Esophagus squamous epithelium (tissue), 5 donors: ENCODE measurements at regions of chr14 and their contacts with region 1.

Region 1: DNA sequence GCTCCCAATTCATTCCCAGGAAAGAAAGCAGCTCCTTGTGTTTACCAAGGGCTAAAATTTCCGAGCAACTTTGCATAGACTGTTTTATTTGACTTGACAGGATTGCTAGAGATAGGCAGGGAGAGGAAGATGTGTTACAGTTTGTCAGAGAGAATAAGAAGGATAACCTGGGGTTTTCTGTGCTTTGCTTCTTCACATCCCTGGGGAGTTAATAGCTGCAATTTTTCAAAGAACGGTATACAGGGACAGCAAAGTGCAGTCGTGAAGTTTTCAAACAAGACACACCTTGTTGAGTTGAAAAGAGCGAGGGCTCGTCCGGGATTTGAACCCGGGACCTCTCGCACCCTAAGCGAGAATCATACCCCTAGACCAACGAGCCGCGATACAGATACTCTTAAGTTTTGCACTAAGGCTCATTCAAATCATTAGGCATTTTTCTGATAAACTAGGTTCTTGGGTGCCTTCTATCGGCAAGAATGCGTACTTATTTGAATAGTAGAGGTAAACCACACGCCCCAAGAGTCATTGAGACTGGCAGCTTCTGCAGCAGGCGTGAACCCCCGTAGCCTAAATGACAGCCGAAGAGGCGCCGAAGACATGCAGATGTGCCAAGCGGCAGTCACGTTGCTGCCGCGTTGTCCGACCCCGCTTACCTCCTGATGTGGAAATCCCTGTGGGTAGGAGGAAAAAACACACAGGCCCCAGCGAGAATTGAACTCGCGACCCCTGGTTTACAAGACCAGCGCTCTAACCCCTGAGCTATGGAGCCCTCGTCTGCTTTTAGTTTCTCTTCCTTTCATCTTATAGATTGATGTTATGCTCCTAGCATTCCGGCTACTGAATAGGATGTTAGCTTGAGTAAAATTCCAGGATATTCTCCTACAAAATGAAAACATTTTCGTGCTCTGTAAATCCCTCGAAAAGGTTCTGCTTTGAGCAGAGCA is 22.2 kb upstream of the RNASE12 start:
- DNase-seq: no peak
- H3K4me3 ChIP-seq: peak overlapping the region; percentile 24 to 67 (median 44)
- H3K27ac ChIP-seq: peak overlapping the region; percentile 35 to 88 (median 78)
- H3K4me1 ChIP-seq: peaks cover 0 to 45% (median 6%) of the 10 kb centered on the region in 3 donors
- H3K27me3 ChIP-seq: no peaks in the 10 kb centered on the region
- CTCF ChIP-seq: peak; percentile 49 to 91 (median 82)
- POLR2A ChIP-seq: no peak

Region 2: DNA sequence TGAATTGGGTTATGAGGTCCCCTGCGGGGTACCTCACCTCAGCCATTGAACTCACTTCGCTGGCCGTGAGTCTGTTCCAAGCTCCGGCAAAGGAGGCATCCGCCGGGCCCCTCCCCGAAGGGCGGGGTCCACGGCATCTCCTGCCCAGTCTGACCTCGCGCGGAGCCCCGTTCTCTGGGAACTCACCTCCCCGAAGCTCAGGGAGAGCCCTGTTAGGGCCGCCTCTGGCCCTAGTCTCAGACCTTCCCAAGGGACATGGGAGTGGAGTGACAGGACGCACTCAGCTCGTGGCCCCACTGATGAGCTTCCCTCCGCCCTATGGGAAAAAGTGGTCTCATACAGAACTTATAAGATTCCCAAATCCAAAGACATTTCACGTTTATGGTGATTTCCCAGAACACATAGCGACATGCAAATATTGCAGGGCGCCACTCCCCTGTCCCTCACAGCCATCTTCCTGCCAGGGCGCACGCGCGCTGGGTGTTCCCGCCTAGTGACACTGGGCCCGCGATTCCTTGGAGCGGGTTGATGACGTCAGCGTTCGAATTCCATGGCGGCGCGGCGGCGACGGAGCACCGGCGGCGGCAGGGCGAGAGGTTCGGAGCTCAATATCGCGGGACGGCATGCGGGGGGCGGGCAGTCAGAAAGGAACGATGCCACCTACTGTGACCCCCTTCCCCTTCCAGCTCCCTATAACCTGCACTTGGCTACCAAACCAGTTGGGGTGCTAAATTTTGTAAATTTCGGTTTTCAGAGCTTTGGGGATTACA is 270.1 kb before region 1 on chr14 and contains the start of gene PARP2:
- intact Hi-C with region 1: loop called (anchors 5 kb)
- DNase-seq: peak; percentile 84
- H3K4me3 ChIP-seq: peak within 1 kb of the TSS; percentile 65 to 89 (median 74)
- H3K27ac ChIP-seq: peak within 1 kb of the TSS; percentile 93 to 97 (median 96)
- H3K4me1 ChIP-seq: peaks cover 5 to 18% (median 9%) of the 10 kb centered on the region in 3 donors
- H3K27me3 ChIP-seq: no peaks in the 10 kb centered on the region
- CTCF ChIP-seq: peak in 1 of 6 experiments; percentile 18
- POLR2A ChIP-seq: peak; percentile 19 to 94 (median 70)
- total RNA-seq, gene PARP2: 5.0 to 20.3 (median 11.7) TPM

Region 3: DNA sequence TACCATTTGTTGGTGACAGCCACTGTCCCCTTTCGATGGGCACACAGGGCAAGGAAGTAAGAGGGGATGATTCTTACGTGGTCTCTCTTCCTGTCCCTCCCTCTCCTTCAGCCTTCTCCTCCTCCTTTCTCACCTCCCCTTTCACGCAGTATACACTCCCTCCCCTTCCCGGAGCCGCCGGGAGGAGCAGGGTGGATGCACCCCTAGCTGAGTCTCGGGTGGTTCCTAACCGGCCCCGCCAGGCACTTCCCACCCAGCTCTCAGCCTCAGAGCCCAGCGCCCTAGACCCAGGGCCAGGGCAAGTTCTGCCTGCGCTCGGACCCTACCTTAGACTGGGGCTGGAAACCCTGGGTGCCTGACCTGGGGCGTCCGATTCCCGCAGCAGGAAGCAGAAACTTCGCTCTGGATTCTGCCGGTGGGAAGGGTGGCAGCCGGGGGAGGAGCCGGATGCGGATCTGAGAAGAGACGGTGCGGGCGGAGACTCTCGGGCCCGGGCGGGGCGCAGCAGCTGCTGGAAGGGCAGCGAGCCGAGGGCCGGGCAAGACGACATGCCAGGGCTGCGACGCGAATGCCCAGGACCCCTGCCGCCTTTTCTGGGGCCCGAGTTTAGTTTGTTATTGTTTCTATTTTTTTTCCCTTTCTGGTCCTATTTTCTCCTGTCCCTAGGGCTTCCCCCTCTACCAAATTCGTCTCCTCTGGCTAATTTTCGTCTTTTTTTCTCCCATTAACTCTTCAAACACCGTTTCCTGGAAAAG is 200.1 kb before region 1 on chr14 and contains the start of gene TEP1:
- intact Hi-C with region 1: loop called (anchors 5 kb)
- DNase-seq: peak; percentile 40
- H3K4me3 ChIP-seq: peak within 1 kb of the TSS; percentile 53 to 91 (median 85)
- H3K27ac ChIP-seq: peak within 1 kb of the TSS; percentile 88 to 99 (median 98)
- H3K4me1 ChIP-seq: peaks cover 0 to 35% (median 10%) of the 10 kb centered on the region in 3 donors
- H3K27me3 ChIP-seq: no peaks in the 10 kb centered on the region
- CTCF ChIP-seq: no peak
- POLR2A ChIP-seq: peak in 3 of 4 donors; percentile 11 to 84 (median 80)
- total RNA-seq, gene TEP1: 13.4 to 16.6 (median 14.7) TPM

Region 4: DNA sequence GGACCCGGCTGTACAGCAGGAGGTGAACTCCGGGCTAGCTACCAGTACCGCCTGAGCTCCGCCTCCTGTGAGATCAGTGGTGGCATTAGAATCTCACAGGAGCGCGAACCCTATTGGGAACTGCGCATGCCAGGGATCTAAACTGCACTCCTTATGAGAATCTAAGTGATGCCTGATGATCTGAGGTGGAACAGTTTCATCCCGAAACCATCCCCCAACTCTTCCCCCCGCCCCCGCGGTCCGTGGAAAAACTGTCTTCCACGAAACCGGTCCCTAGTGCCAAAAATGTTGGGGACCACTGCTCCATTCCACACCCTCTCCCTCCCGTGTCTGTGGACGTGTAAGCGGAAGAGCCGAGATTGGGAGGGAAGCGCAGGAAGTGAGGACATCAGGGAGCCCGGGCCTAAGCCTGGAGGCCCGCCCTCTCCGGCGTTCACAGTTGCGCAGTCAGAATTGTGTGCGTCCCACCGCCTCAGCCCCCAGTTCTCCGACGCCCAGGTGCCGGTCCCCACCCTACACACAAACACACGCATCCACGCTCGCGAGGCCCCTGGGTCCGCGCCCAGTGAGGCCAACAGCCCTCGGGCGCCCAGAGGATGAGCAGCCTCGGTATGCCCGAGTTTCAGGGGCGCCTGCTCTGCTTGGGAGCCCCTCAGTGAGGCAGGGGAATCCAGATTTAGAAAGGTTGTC is 69.2 kb after region 1 on chr14:
- intact Hi-C with region 1: loop called (anchors 2 kb)
- DNase-seq: peak; percentile 31
- H3K4me3 ChIP-seq: peak overlapping the region; percentile 65 to 93 (median 80)
- H3K27ac ChIP-seq: peak overlapping the region; percentile 98 to 100 (median 99)
- H3K4me1 ChIP-seq: peaks cover 20 to 66% (median 21%) of the 10 kb centered on the region in 3 donors
- H3K27me3 ChIP-seq: no peaks in the 10 kb centered on the region
- CTCF ChIP-seq: peak in 3 of 6 experiments; percentile 3 to 9 (median 4)
- POLR2A ChIP-seq: peak in 3 of 4 donors; percentile 68 to 96 (median 92)

Region 5: DNA sequence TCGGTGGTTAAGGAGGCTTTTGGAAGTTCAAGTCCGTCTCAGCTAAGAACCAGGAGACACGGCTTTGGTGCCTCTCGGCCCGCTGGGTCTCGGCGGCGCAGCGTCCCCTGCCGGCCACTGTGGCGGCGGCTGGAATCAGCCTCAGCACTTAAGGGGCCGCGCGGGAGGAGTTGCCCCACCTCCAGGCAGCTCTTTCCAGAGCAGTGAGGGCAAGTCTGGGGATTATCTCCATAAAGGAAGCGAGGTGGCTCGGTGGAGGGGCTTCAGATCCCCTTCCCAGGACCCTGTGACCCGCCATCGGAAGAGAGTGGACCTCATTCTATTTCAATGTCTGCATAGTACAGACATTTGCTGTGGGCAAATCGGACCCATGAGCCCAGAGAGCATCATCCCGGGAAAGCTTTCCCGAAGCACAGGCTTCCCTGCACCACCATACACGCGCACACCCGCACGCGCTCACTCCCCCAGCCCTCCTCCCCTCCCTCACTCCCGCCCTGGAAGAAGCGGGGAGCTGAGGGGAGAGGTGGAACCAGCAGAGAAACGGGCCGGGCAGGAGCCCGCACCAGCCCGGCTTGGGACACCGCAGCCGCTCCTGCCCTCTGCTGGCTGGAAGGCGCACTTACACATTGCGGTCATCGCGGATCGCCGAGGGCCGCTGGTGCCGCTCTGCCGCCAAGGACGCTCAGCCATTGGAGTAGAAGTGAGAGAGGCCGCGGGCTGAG is 357.8 kb after region 1 on chr14:
- intact Hi-C with region 1: loop called (anchors 10 kb)
- DNase-seq: no peak
- H3K4me3 ChIP-seq: peak overlapping the region; percentile 43 to 75 (median 62)
- H3K27ac ChIP-seq: peak overlapping the region; percentile 60 to 88 (median 82)
- H3K4me1 ChIP-seq: peaks cover 0 to 28% (median 4%) of the 10 kb centered on the region in 3 donors
- H3K27me3 ChIP-seq: peaks cover 0 to 7% (median 0%) of the 10 kb centered on the region in 4 donors
- CTCF ChIP-seq: peak; percentile 72 to 96 (median 90)
- POLR2A ChIP-seq: no peak